ENCODE measurements at regions of chr12 and their contacts with region 1.

Region 1: DNA sequence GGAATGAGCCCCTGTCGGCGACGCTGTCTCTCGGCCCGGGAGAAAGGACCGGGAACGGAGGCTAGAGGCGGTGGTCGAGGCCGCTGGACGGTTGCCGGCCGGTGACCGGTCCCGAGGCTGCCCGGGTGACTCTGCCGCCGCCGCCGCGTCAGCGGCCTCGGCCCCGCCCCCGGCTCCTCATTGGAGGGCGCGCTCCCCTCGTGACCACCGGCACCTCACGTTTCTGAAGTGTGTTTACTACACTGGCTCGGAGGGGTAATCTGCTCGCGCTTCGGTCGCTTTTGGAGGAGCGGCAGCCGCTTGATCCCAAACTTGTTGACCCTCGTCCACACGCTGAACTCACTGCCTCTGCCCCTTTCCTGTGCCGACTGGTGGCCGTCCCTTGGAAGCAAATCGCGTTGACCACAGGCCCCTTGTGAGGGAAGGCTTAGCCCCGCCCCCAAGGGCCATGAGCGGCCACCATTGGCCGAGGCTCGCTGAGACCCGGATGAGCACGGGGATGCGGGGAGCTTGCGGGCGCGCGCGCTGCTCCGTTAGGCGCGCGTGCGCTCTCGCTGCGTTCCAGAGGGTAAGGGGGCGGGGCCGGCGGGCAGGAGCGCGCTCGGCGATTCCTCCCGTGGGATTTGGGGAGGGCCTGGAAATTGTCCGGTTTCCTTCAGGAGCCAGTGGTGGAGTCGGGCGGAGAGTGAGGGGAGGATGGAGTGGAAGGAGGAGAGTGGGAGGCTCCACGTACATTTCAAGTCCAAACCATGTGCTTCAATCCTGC is at the start of gene CRY1:
- DNase-seq: peak; percentile 98
- H3K4me3 ChIP-seq: peak within 1 kb of the TSS; percentile 83 to 98 (median 88)
- H3K27ac ChIP-seq: peak within 1 kb of the TSS; percentile 95 to 100 (median 97)
- H3K4me1 ChIP-seq: peaks cover 0 to 36% (median 23%) of the 10 kb centered on the region in 4 donors
- H3K27me3 ChIP-seq: no peaks in the 10 kb centered on the region
- CTCF ChIP-seq: no peak
- EP300 ChIP-seq: peak in 2 of 4 donors; percentile 43 to 72
- POLR2A ChIP-seq: peak; percentile 72 to 95
- total RNA-seq, gene CRY1: 20.3 to 40.4 (median 27.3) TPM

Region 2: DNA sequence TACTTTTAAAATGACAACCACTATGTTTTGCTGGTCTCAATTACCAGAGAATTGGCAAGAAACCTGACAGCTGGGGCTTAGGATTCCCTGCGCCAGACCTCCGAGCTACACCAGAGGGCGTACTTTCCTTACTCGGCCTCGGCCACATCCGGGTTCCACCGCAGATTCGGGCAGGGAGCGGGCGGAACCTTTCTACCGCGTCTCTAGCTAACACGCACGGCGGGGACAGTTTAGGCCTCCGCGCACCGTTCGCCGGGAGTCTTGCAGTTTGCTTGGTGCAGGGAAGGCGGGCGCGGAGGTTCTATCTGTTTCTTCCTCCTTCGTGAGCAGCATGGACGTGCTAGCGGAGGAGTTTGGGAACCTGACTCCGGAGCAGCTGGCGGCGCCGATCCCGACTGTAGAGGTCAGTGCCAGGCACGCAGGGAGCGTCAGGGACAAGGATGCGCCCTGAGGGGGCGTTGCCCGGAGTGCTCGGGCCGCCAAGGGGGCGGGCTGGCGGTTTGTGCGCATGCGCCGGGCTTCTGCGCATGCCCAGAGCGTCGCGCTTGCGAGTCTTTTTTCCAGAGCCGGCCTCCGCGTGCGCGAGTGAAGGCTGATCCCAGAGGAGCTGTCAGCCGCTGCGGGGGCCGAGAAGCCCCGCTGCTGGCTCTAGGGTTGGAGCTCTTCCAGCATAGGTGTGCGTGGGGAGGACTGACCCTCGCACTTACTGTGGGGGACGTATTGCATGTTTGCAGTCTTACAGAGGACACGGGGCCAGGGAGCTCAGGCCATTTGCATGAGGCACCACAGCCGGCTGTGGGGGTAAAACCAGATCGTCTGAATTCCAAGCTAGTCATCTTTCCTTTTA is 735.8 kb before region 1 on chr12 and contains the start of gene POLR3B:
- intact Hi-C with region 1: loop called (anchors 5 kb)
- DNase-seq: peak; percentile 98
- H3K4me3 ChIP-seq: peak within 1 kb of the TSS; percentile 57 to 84 (median 76)
- H3K27ac ChIP-seq: peak within 1 kb of the TSS; percentile 93 to 96 (median 94)
- H3K4me1 ChIP-seq: peaks cover 0 to 15% (median 14%) of the 10 kb centered on the region in 4 donors
- H3K27me3 ChIP-seq: no peaks in the 10 kb centered on the region
- CTCF ChIP-seq: peak; percentile 81 to 88 (median 83)
- EP300 ChIP-seq: no peak
- POLR2A ChIP-seq: peak; percentile 70 to 79
- total RNA-seq, gene POLR3B: 3.9 to 5.4 (median 4.8) TPM

Region 3: DNA sequence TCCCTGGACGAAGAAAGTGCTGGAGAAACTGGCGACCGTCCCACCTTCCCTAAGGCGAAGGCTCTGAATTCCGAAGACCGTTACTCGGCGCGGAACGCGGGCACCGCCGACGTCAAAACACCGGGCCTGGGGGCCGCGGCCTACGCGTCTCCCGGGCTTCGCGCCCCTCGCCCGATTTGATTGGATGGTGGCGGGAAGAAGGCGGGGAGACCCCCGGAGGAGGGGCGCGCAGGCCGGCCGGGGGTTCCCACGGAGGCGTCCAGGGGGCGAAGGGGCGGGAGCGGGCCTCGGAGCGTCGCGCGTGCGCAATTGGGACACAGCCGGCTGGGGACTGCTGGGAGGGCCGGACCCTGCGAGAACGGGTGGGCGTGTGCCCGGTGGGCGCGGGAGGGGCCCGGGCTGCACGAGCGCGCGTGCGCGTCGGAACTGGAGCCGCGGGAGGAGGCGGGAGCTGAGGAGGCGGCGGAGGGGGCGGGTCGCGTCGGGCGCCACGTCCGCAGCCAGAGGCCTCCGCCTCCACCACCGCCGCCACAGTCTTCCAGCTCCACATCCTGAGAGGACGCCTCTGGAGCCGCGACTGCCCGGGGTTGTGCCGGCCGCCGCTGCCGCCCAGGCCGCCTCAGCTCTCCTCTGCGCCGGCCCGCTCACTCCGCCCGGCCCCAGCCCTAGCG is 138.1 kb before region 1 on chr12 and contains the start of gene TMEM263:
- intact Hi-C with region 1: loop called (anchors 2 kb)
- DNase-seq: peak; percentile 98
- H3K4me3 ChIP-seq: peak within 1 kb of the TSS; percentile 72 to 97 (median 95)
- H3K27ac ChIP-seq: peak within 1 kb of the TSS; percentile 99 to 100 (median 100)
- H3K4me1 ChIP-seq: peaks cover 0 to 45% (median 39%) of the 10 kb centered on the region in 4 donors
- H3K27me3 ChIP-seq: no peaks in the 10 kb centered on the region
- CTCF ChIP-seq: no peak
- EP300 ChIP-seq: no peak
- POLR2A ChIP-seq: peak in 1 of 2 donors; percentile 46
- total RNA-seq, gene TMEM263: 39.5 to 51.7 (median 46.4) TPM

Region 4: GRCh38 chr12:106986625-106987430 is 106.8 kb before region 1 on chr12 and contains the start of gene MTERF2:
- intact Hi-C with region 1: loop called (anchors 1 kb)
- DNase-seq: peak; percentile 97
- H3K4me3 ChIP-seq: peak within 1 kb of the TSS; percentile 70 to 76 (median 73)
- H3K27ac ChIP-seq: peak within 1 kb of the TSS; percentile 92 to 96 (median 94)
- H3K4me1 ChIP-seq: peaks cover 0 to 32% (median 19%) of the 10 kb centered on the region in 4 donors
- H3K27me3 ChIP-seq: no peaks in the 10 kb centered on the region
- CTCF ChIP-seq: no peak
- EP300 ChIP-seq: no peak
- POLR2A ChIP-seq: peak; percentile 60 to 63
- total RNA-seq, gene MTERF2: 15.8 to 31.1 (median 21.3) TPM

Region 5: DNA sequence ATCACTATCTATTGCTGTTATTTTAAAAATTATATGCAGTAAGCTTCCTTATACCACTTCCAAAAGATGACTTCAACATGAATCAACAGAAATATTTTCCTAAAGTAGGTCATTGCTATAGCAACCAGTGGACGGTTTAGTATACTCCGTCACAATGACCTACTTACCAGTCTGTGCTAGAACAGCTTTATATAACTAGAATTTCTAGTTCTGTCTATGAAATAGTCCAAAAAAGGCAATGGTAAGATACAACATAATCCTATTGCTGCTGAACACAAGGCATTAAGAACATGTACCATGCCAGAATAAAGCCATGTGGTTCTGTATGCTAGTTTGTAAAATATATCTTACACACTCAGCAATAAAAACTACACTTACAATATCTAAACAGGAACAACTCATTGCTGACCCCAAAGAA is 66.0 kb before region 1 on chr12:
- intact Hi-C with region 1: loop called (anchors 2 kb)
- DNase-seq: no peak
- H3K4me3 ChIP-seq: no peak overlapping the region
- H3K27ac ChIP-seq: peak overlapping the region; percentile 66 to 83 (median 82)
- H3K4me1 ChIP-seq: peaks cover 0 to 59% (median 37%) of the 10 kb centered on the region in 4 donors
- H3K27me3 ChIP-seq: no peaks in the 10 kb centered on the region
- CTCF ChIP-seq: no peak
- EP300 ChIP-seq: peak; percentile 33 to 92 (median 80)
- POLR2A ChIP-seq: no peak

Region 6: GRCh38 chr12:107236824-107237511 is 143.4 kb after region 1 on chr12:
- intact Hi-C with region 1: no loop called
- DNase-seq: no peak
- H3K4me3 ChIP-seq: no peak overlapping the region
- H3K27ac ChIP-seq: no peak overlapping the region
- H3K4me1 ChIP-seq: no peaks in the 10 kb centered on the region
- H3K27me3 ChIP-seq: no peaks in the 10 kb centered on the region
- CTCF ChIP-seq: no peak
- EP300 ChIP-seq: no peak
- POLR2A ChIP-seq: no peak